H1 (cell line): ENCODE measurements at regions of chr22 and their contacts with region 1.

Region 1: DNA sequence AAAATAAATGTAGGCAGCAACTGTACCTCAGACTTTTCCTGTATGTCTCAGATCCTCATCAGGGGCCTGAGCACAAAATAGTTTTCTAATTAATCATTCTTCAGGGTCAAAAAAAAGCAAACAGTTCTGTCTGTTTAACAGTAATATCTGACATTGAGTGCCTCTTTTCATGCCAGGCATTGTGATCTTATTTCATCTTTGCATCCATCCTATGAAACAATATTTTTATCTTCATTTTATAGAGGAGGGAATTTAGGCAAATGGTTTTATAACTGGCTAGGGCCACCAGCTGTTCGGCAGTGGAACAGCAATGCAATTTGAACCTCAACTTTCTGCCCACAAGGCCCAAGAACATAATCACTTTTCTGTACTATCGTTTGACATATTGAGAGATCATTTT is 145.6 kb downstream of the WNT7B start:
- DNase-seq: no peak
- H3K4me3 ChIP-seq: no peak overlapping the region
- H3K27ac ChIP-seq: no peak overlapping the region
- H3K4me1 ChIP-seq: peaks cover 0 to 5% (median 0%) of the 10 kb centered on the region in 4 experiments; a peak in 1 of 7 replicates
- H3K27me3 ChIP-seq: no peaks in the 10 kb centered on the region
- CTCF ChIP-seq: peak in 2 of 3 experiments; percentile 15 to 45; a peak in 2 of 4 replicates
- EP300 ChIP-seq: no peak
- POLR2A ChIP-seq: no peak
- RAD21 ChIP-seq: peak; percentile 44 to 48

Region 2: DNA sequence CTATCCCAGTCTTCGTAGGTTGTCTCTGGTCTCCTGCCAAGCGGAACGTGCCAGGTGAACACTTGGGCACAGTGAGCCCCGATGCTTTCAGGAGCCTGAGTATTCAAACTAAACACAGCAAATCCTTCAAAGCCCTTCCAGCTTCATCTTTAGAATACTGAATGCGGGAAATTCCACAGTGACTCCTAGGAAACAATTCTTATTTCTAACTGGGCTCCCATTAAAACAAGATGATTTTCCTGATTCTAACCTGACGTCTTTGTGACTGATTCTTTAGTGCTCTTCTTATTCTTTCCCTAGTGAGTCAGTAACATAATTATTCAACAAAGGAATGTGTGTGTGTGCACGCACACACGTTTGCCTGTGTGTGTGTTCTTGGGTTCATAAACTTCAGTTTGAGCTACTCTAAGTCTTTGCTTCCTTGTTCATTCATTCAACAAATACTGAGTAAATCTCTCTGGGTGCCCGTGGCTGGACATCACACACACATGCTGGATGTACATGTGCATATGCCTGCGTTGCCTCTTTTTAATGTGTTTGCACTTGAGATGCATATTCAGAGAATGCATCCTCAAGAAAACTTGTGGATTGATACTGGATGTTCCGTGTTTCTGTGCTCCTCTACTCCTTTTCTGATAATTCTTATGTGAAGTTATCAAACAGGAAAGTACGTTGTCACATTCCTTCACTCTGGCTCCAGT is 11.0 kb after region 1 on chr22:
- CTCF ChIA-PET with region 1: interaction called, 15 read pairs
- POLR2A ChIA-PET with region 1: no interaction called
- DNase-seq: no peak
- H3K4me3 ChIP-seq: no peak overlapping the region
- H3K27ac ChIP-seq: no peak overlapping the region
- H3K4me1 ChIP-seq: peaks cover 4 to 26% (median 17%) of the 10 kb centered on the region in 4 experiments; a peak in 6 of 7 replicates
- H3K27me3 ChIP-seq: no peaks in the 10 kb centered on the region
- CTCF ChIP-seq: no peak
- EP300 ChIP-seq: no peak
- POLR2A ChIP-seq: no peak
- RAD21 ChIP-seq: no peak